Ovary (tissue), 10 donors: ENCODE measurements at regions of chr9 and their contacts with region 1.

Region 1: GRCh38 chr9:15211160-15211814 is 95.7 kb downstream of the TTC39B start:
- DNase-seq: peak in 4 of 5 donors; percentile 32 to 73 (median 49)
- H3K4me3 ChIP-seq: no peak overlapping the region
- H3K27ac ChIP-seq: no peak overlapping the region
- H3K4me1 ChIP-seq: no peaks in the 10 kb centered on the region
- H3K27me3 ChIP-seq: no peaks in the 10 kb centered on the region
- CTCF ChIP-seq: peak; percentile 72 to 81 (median 74)
- EP300 ChIP-seq: no peak
- POLR2A ChIP-seq: no peak

Region 2: DNA sequence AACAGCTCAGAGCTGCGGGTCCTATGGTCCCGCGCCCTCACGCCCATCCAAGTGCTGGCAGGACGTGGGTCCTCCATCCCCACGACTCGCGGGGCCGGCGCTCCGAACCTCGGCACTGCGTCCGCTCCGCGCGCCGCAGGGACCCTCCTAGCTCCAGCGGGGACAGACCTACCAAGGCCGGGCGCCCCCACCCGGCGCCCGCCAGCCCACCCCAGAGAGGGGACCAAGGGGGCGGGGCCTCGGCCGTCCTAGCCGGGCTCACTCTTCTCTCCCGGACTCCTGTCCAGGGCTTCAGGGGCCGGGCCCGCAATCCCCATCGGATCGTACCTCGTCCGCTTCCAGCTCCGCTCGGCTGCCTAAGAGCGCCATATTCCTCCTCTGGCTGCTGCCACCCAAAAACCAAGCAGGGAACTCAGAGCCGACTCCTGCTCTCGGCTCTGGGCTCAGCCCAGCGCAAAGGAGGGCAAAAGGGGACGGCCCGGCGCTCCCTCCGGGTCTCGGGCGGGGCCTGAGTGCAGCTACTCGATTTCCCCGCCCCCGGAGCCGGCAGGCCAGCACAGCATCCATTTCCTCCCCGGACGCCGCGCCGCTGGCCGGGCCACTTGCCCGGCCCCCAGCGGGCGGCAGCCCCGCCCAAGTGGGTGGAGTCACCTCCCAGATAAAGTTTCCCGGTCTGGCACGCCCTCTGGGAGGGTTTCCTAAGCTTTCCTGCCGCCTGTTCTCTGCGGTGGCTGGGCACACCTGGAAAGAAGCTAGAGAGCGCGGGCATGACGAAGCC is 95.7 kb after region 1 on chr9 and contains the start of gene TTC39B:
- intact Hi-C with region 1: loop called in 1 of 4 experiments (anchors 10 kb)
- DNase-seq: peak; percentile 90 to 96 (median 93)
- H3K4me3 ChIP-seq: peak within 1 kb of the TSS; percentile 84
- H3K27ac ChIP-seq: peak within 1 kb of the TSS; percentile 79 to 90
- H3K4me1 ChIP-seq: no peaks in the 10 kb centered on the region
- H3K27me3 ChIP-seq: no peaks in the 10 kb centered on the region
- CTCF ChIP-seq: no peak
- EP300 ChIP-seq: no peak
- POLR2A ChIP-seq: peak; percentile 78
- total RNA-seq, gene TTC39B: 8.6 to 26.0 (median 15.3) TPM

Region 3: GRCh38 chr9:15377625-15378540 is 166.6 kb after region 1 on chr9:
- intact Hi-C with region 1: no loop called
- DNase-seq: no peak
- H3K4me3 ChIP-seq: no peak overlapping the region
- H3K27ac ChIP-seq: peak overlapping the region in 1 of 2 donors; percentile 33
- H3K4me1 ChIP-seq: peaks cover 4% of the 10 kb centered on the region
- H3K27me3 ChIP-seq: no peaks in the 10 kb centered on the region
- CTCF ChIP-seq: no peak
- EP300 ChIP-seq: no peak
- POLR2A ChIP-seq: no peak

Region 4: DNA sequence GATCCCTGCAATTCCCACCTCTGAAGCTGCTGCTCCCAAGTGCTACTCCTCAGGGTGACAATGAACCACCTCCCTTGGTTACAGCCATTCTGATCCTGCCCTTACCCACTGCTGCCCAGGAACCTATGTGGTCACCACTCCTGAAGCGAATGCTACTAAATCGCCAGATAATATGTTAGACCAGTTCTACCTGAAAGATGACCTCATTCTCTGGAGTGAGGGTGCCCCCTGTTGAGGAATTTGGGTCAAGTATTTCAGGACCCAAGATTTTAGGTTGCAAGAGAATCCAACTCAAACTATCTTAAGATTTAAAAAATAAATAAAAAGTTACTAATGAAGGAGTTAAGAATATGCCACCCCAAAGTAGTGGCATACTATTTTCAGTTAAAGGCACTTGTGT is 205.6 kb after region 1 on chr9:
- intact Hi-C with region 1: loop called in 3 of 4 experiments (anchors 5 to 10 kb)
- DNase-seq: peak in 1 of 5 donors; percentile 47
- H3K4me3 ChIP-seq: no peak overlapping the region
- H3K27ac ChIP-seq: no peak overlapping the region
- H3K4me1 ChIP-seq: no peaks in the 10 kb centered on the region
- H3K27me3 ChIP-seq: no peaks in the 10 kb centered on the region
- CTCF ChIP-seq: peak in 2 of 3 donors; percentile 24 to 29
- EP300 ChIP-seq: no peak
- POLR2A ChIP-seq: no peak

Region 5: DNA sequence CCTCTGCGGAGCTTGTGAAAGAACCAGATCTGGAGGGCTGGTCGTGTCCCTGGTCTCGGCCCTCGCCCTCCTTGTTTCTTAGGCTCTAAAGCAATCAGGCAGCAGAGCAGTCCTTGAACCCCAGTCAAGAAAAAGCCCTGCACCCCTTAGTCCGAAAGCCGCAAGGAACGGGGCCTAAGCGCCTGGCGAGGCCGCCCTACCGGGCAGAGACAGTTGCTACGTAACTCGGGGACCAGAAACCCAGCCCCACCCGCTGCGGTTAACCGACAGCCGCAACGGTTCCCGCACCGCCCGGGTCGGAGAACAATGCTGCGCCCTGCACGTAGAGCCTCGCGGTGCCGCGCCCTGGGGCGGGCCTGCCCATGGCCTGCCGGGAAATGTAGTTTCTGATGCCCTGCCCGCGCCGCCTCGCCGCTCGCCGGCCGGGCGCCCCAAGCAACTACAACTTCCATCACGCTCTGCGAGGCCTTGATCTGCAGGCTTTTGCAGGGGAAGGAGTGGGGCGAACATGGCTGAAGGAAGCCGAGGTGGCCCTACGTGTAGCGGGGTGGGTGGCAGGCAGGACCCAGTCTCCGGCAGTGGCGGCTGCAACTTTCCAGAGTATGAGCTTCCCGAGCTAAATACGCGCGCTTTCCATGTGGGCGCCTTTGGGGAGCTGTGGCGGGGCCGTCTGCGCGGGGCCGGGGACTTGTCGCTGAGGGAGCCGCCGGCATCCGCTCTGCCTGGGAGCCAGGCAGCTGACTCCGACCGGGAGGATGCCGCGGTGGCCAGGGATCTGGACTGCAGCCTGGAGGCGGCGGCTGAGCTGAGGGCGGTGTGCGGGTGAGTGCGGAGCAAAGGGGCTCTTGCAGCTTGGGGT is 211.3 kb after region 1 on chr9 and contains the start of gene SNAPC3:
- intact Hi-C with region 1: loop called in 3 of 4 experiments (anchors 5 to 10 kb)
- DNase-seq: peak; percentile 89 to 94 (median 93)
- H3K4me3 ChIP-seq: peak within 1 kb of the TSS; percentile 80
- H3K27ac ChIP-seq: peak within 1 kb of the TSS; percentile 47 to 90
- H3K4me1 ChIP-seq: peaks cover 3% of the 10 kb centered on the region
- H3K27me3 ChIP-seq: no peaks in the 10 kb centered on the region
- CTCF ChIP-seq: no peak
- EP300 ChIP-seq: peak; percentile 74
- POLR2A ChIP-seq: peak; percentile 39
- total RNA-seq, gene SNAPC3: 18.8 to 32.3 (median 26.2) TPM

Region 6: DNA sequence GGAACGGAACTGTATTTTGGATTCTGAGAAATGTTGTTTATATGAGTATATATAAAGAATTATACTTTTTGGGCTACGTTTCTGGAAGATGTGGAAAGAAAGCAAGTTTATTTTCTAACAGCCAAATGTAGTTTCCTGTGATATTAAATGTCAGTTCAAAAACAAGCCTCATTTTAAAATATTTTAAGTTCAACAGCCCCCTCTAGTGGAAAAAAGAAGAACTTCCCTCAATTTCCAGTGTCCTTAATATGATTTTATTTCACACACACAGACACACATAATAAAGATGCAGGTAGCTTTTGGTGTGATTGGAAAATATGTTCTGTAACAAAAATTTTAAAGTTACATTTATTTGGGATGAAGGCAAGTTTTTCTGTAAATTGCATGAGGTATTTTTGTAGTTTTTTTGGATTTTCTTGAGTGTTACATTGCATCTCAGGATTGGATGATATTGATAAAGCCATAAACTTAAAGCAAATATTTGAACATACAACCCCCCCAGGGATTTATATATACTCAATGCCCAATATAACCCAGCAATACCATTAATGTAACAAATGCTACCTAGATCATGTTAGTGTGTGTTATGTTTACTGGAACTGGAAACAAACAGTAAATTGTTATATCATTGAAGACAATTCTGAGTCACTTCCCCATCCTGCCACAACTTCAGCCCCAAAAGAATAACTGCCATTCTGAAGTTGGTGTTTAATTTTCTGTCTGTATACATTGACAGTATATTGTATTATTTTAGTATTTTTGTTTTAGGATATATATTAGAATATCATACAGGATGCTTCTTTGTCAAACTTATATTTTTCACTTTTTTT is 395.6 kb after region 1 on chr9:
- intact Hi-C with region 1: loop called in 3 of 4 experiments (anchors 10 kb)
- DNase-seq: no peak
- H3K4me3 ChIP-seq: no peak overlapping the region
- H3K27ac ChIP-seq: no peak overlapping the region
- H3K4me1 ChIP-seq: no peaks in the 10 kb centered on the region
- H3K27me3 ChIP-seq: no peaks in the 10 kb centered on the region
- CTCF ChIP-seq: peak; percentile 44 to 60 (median 46)
- EP300 ChIP-seq: no peak
- POLR2A ChIP-seq: no peak